ENCODE measurements at regions of chr1 and their contacts with region 1.

Region 1: GRCh38 chr1:202810615-202811295 is at the start of gene PCAT6:
- DNase-seq: peak; percentile 96
- ATAC-seq: peak; percentile 96
- total RNA-seq, gene PCAT6: 1.0 TPM

Region 2: GRCh38 chr1:202861420-202862200 is 50.9 kb after region 1 on chr1:
- intact Hi-C with region 1: loop called (anchors 10 kb)
- DNase-seq: peak; percentile 96
- ATAC-seq: peak; percentile 99